WTC11 (cell line): ENCODE measurements at regions of chr5 and their contacts with region 1.

Region 1: DNA sequence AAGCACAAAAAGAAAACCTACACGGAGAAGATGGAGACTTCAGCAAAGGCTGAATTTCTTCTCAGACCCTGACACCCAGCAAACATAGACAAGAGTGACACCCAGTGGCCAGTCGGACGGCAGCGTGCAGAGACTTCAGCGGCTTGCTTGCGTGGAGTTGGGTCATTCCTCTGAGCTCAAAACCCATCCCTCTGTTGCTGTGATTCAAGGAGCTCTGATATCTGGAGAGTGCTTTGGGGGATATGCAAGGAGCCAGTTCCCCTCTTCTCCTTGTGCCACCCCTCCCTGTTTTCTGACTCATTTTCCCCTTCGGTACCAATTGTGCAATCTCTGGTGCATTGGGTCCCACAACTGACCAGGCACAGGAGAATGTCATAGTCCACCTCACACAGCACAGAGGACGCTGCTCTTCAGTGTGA is 27.5 kb downstream of the SH3TC2 start:
- DNase-seq: peak; percentile 81
- ATAC-seq: peak; percentile 93
- H3K4me3 Mint-ChIP-seq: no peak overlapping the region
- H3K27ac Mint-ChIP-seq: no peak overlapping the region
- H3K4me1 Mint-ChIP-seq: no peaks in the 10 kb centered on the region
- H3K27me3 Mint-ChIP-seq: no peaks in the 10 kb centered on the region; the same call in 1 of the 2 replicates
- CTCF ChIP-seq: peak; percentile 64

Region 2: GRCh38 chr5:148740966-148741742 is 294.2 kb before region 1 on chr5:
- CTCF ChIA-PET with region 1: interaction called, 66 read pairs
- POLR2A ChIA-PET with region 1: no interaction called
- DNase-seq: no peak
- ATAC-seq: peak; percentile 64; the same call in 1 of the 2 replicates
- H3K4me3 Mint-ChIP-seq: no peak overlapping the region
- H3K27ac Mint-ChIP-seq: no peak overlapping the region
- H3K4me1 Mint-ChIP-seq: no peaks in the 10 kb centered on the region
- H3K27me3 Mint-ChIP-seq: no peaks in the 10 kb centered on the region; the same call in 1 of the 2 replicates
- CTCF ChIP-seq: peak; percentile 39; the same call in 1 of the 2 replicates

Region 3: GRCh38 chr5:148912714-148913398 is 122.5 kb before region 1 on chr5:
- CTCF ChIA-PET with region 1: interaction called, 16 read pairs
- POLR2A ChIA-PET with region 1: no interaction called
- DNase-seq: peak; percentile 55
- ATAC-seq: peak; percentile 84
- H3K4me3 Mint-ChIP-seq: no peak overlapping the region
- H3K27ac Mint-ChIP-seq: peak overlapping the region; percentile 93
- H3K4me1 Mint-ChIP-seq: peaks cover 30% of the 10 kb centered on the region
- H3K27me3 Mint-ChIP-seq: no peaks in the 10 kb centered on the region
- CTCF ChIP-seq: 0 out of 2 replicates have a peak, but pooled peaks have one; percentile 0

Region 4: GRCh38 chr5:148972958-148973357 is 62.4 kb before region 1 on chr5:
- CTCF ChIA-PET with region 1: interaction called, 10 read pairs
- POLR2A ChIA-PET with region 1: no interaction called
- DNase-seq: no peak
- ATAC-seq: no peak
- H3K4me3 Mint-ChIP-seq: no peak overlapping the region
- H3K27ac Mint-ChIP-seq: no peak overlapping the region
- H3K4me1 Mint-ChIP-seq: peaks cover 33% of the 10 kb centered on the region
- H3K27me3 Mint-ChIP-seq: no peaks in the 10 kb centered on the region
- CTCF ChIP-seq: no peak

Region 5: DNA sequence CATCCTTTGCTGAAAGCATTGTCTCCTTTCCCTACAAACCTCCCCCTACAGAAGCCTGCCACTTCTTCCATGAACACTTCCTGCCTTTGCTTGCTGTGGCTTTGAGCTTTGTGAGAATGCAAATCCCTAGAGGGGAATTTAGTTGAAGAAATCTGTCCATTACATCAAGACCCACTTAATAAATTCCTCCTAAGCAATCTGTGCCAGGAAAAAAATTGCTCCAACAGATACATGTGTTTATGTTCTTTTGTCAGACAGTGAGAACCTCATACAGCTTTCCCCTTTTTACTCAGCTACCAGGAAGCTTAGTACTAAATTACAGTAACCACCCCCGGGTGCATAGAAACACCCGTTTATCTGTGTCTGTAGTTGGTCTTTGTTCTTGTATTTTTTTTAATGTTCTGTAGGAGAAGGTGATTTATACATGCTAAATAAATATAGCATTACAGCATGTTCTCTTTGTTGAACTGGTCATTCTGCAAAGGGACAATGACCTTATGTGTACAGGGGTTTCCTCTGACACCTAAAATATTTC is 16.4 kb before region 1 on chr5:
- CTCF ChIA-PET with region 1: interaction called, 21 read pairs
- POLR2A ChIA-PET with region 1: no interaction called
- DNase-seq: no peak
- ATAC-seq: peak; percentile 51; the same call in 1 of the 2 replicates
- H3K4me3 Mint-ChIP-seq: no peak overlapping the region
- H3K27ac Mint-ChIP-seq: no peak overlapping the region
- H3K4me1 Mint-ChIP-seq: peaks cover 16% of the 10 kb centered on the region
- H3K27me3 Mint-ChIP-seq: no peaks in the 10 kb centered on the region
- CTCF ChIP-seq: no peak

Region 6: DNA sequence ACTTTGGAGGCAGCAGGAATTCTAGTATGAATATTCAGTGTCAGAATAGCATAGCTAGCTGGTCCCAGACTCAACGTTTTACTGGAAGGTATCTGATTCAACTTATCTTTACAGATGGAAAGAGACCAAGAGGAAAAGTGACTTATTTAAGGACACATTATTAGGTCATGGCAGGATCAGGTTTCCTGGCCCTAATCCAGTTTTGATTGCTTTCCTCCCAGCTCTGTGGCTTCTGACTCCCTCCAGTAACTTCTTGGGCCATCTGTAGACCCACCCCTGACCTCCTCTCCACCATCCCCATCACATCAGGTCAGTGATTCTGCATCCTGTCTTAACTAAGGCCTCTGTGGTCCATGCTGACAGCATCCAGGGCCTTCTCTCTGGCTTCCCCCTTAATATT is 10.9 kb before region 1 on chr5:
- CTCF ChIA-PET with region 1: interaction called, 21 read pairs
- POLR2A ChIA-PET with region 1: no interaction called
- DNase-seq: no peak
- ATAC-seq: no peak
- H3K4me3 Mint-ChIP-seq: no peak overlapping the region
- H3K27ac Mint-ChIP-seq: no peak overlapping the region
- H3K4me1 Mint-ChIP-seq: peaks cover 2% of the 10 kb centered on the region
- H3K27me3 Mint-ChIP-seq: no peaks in the 10 kb centered on the region; the same call in 1 of the 2 replicates
- CTCF ChIP-seq: no peak

Region 7: DNA sequence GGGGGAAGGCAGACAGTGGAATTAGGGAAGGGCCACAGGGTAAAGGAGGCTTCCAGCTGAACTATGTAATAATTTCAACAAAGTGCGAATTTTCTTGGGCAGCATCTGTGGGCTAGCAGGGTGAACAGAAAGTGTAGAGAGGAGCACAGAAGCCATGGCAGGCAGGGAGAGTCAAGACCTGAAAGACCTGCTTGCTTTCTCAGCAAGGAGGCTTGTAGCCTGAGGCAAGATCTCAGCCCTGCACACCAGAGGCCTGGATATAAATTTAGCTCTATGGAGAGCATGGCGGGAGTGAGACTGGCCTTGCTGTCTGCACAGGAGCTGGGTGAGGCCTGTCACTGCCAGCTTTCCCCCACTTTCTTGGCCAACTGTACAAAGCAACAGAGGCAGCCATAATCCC is 59.6 kb after region 1 on chr5:
- CTCF ChIA-PET with region 1: no interaction called
- POLR2A ChIA-PET with region 1: no interaction called
- DNase-seq: no peak
- ATAC-seq: no peak
- H3K4me3 Mint-ChIP-seq: no peak overlapping the region
- H3K27ac Mint-ChIP-seq: no peak overlapping the region
- H3K4me1 Mint-ChIP-seq: no peaks in the 10 kb centered on the region
- H3K27me3 Mint-ChIP-seq: peaks cover 8% of the 10 kb centered on the region
- CTCF ChIP-seq: no peak

Region 8: GRCh38 chr5:149125386-149125891 is 90.1 kb after region 1 on chr5:
- CTCF ChIA-PET with region 1: interaction called, 12 read pairs
- POLR2A ChIA-PET with region 1: no interaction called
- DNase-seq: peak; percentile 65
- ATAC-seq: peak; percentile 95
- H3K4me3 Mint-ChIP-seq: no peak overlapping the region
- H3K27ac Mint-ChIP-seq: no peak overlapping the region
- H3K4me1 Mint-ChIP-seq: peaks cover 23% of the 10 kb centered on the region
- H3K27me3 Mint-ChIP-seq: no peaks in the 10 kb centered on the region
- CTCF ChIP-seq: no peak